AG04450 (cell line): ENCODE measurements at regions of chr17 and their contacts with region 1.

Region 1: GRCh38 chr17:35969558-35970380 is 11.5 kb downstream of the CCL16 start:
- DNase-seq: peak; percentile 58
- H3K4me3 ChIP-seq: no peak overlapping the region
- H3K27ac ChIP-seq: no peak overlapping the region
- H3K27me3 ChIP-seq: no peaks in the 10 kb centered on the region
- CTCF ChIP-seq: peak; percentile 80

Region 2: DNA sequence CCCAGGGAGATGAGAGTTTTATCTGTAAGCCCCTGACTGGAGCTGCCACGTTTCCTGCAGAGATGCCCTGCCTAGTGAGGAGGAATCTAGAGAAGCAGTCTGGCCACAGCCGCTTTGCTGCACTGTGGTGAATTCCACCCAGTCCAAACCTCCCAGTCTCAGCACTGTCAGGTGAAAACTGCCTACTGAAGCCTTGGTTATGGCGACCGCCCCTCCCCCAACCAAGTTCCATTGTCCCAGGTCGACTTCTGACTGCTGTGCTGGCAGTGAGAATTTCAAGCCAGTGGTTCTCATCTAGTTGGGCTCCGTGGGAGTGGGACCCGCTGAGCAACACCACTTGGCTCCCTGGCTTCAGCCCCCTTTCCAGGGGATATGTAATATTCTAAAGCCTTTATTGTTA is 16.0 kb before region 1 on chr17:
- CTCF ChIA-PET with region 1: interaction called, 17 read pairs
- POLR2A ChIA-PET with region 1: no interaction called
- DNase-seq: no peak
- H3K4me3 ChIP-seq: no peak overlapping the region
- H3K27ac ChIP-seq: no peak overlapping the region
- H3K27me3 ChIP-seq: no peaks in the 10 kb centered on the region
- CTCF ChIP-seq: no peak

Region 3: DNA sequence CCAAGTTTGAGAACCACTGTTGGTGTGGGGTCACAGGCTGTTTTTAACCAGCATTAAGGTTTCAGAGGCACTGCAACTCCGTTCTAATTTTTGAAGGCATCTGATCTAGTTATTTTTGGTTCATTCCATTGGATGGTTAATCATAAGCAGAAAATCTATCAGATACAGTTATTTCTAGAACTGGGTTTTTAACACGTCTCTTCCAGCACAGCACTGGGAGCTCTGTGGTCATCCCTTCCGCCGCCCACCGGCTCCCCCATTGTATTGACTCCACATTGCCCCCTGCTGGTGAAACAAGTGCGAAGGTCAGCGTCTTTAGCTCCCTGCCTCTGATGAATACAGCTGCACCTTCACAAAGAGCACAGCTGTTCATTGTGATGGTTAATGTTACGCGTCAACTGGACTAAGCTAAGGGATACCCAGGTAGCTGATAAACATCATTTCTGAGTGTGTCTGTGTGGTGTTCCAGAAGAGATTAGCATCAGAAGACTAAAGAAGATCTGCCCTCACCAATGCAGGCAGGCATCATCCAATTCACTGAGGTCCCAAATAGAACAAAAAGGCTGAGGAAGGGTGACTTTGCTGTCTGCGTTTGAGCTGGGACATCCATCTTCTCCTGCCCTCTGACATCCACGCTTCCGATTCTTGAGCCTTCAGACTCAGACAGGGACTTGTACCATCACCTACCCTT is 102.8 kb after region 1 on chr17:
- CTCF ChIA-PET with region 1: interaction called, 20 read pairs
- POLR2A ChIA-PET with region 1: no interaction called
- DNase-seq: no peak
- H3K4me3 ChIP-seq: no peak overlapping the region
- H3K27ac ChIP-seq: no peak overlapping the region
- H3K27me3 ChIP-seq: peaks cover 2% of the 10 kb centered on the region
- CTCF ChIP-seq: peak; percentile 53